ENCODE measurements at regions of chr3 and their contacts with region 1.

Region 1: GRCh38 chr3:193960487-193961274 is 175.3 kb upstream of the HES1 start:
- DNase-seq: no peak
- ATAC-seq: no peak
- H3K4me3 Mint-ChIP-seq: no peak overlapping the region
- H3K27ac Mint-ChIP-seq: no peak overlapping the region
- H3K4me1 Mint-ChIP-seq: peaks cover 20% of the 10 kb centered on the region
- H3K27me3 Mint-ChIP-seq: peaks cover 36% of the 10 kb centered on the region

Region 2: GRCh38 chr3:193418576-193419373 is 541.9 kb before region 1 on chr3:
- CTCF ChIA-PET with region 1: no interaction called
- POLR2A ChIA-PET with region 1: no interaction called
- intact Hi-C with region 1: no loop called
- DNase-seq: no peak
- ATAC-seq: no peak
- H3K4me3 Mint-ChIP-seq: no peak overlapping the region
- H3K27ac Mint-ChIP-seq: no peak overlapping the region
- H3K4me1 Mint-ChIP-seq: no peaks in the 10 kb centered on the region
- H3K27me3 Mint-ChIP-seq: peaks cover 3% of the 10 kb centered on the region

Region 3: DNA sequence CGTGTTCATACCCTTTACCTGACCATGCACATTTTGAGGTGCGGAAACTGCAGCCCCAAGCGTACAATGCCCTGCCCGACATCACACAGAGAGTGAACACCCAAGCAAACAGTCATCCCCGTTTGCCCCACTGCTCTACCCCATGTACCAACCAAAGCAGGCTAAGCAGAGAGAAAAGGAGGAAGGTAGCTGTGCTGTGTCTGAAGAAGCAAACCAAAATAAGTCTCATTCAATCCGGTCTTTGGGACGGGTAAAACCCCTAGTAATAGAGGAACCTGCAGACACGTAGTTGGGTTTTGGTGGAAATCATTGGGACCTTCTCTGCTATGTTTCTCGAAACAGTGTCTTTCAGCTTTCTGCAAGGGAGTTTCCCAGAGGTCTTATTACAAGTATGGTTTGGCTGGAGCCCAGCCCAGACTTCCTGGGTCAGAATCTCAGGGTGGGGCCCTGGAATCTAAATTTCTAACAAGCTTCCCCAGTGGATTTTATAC is 10.6 kb after region 1 on chr3:
- CTCF ChIA-PET with region 1: interaction called, 14 read pairs
- POLR2A ChIA-PET with region 1: no interaction called
- intact Hi-C with region 1: no loop called
- DNase-seq: peak; percentile 38
- ATAC-seq: peak; percentile 77
- H3K4me3 Mint-ChIP-seq: no peak overlapping the region
- H3K27ac Mint-ChIP-seq: no peak overlapping the region
- H3K4me1 Mint-ChIP-seq: peaks cover 28% of the 10 kb centered on the region
- H3K27me3 Mint-ChIP-seq: peaks cover 23% of the 10 kb centered on the region

Measured in activated CD4-positive, alpha-beta T cell treated with anti-CD3 and anti-CD28 coated beads for 36 hours (primary cell).